Panc1 (cell line): ENCODE measurements at regions of chr11 and their contacts with region 1.

Region 1: DNA sequence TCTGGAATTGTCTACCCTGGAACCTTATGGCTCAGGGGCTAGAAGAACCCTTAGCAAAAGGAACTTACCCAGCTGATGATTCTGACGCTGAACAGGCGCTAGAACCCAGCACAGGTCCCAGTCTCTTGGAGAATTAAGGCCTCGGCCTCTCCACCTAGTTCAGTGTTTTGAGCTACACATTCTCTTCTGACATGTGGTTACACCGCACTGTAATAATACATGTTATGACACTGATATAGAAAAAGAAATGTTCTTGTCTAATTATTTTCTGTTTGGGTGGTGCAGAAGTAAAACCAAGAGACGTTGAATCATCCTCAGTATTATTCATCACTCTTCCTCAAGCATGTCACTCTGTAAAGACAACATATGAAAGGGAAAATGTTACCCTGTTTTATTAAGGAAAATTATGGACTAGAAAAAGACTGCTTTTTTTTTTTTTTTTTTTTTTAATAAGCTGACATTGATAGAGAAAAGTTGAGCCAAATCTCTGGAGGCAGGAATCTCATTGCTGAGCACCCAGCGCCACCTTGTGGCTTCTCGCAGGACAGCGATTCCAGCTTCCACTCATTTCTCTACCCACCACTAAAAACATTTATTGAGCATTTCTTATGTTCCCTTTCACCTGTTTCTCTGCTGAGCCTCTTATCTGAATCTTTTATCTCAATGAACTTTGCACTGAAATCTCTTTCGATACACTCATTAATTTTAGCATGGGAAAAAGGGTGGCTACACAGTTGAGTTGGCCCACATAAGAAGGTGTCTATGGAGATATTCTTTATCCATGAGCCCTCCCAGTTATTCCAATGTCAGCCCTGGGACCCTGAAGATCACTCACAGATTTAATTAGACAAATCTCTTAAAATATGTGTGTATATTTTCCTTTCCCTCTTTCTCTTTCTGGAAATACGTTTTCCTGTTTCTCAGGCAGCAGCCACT is 12.6 kb upstream of the APLNR start:
- DNase-seq: peak; percentile 47
- ATAC-seq: peak; percentile 71
- H3K4me3 ChIP-seq: no peak overlapping the region
- H3K27ac ChIP-seq: no peak overlapping the region
- H3K4me1 ChIP-seq: no peaks in the 10 kb centered on the region; the same call in 1 of the 2 replicates
- H3K27me3 ChIP-seq: peaks cover 5% of the 10 kb centered on the region; the same call in 1 of the 2 replicates
- CTCF ChIP-seq: peak; percentile 86

Region 2: GRCh38 chr11:56841210-56841810 is 408.3 kb before region 1 on chr11:
- CTCF ChIA-PET with region 1: interaction called, 34 read pairs
- POLR2A ChIA-PET with region 1: no interaction called
- in situ Hi-C with region 1: no loop called
- intact Hi-C with region 1: loop called (anchors 1 kb)
- DNase-seq: peak; percentile 55
- ATAC-seq: peak; percentile 78; the same call in 1 of the 2 replicates
- H3K4me3 ChIP-seq: no peak overlapping the region
- H3K27ac ChIP-seq: no peak overlapping the region
- H3K4me1 ChIP-seq: no peaks in the 10 kb centered on the region
- H3K27me3 ChIP-seq: no peaks in the 10 kb centered on the region
- CTCF ChIP-seq: peak; percentile 76

Region 3: DNA sequence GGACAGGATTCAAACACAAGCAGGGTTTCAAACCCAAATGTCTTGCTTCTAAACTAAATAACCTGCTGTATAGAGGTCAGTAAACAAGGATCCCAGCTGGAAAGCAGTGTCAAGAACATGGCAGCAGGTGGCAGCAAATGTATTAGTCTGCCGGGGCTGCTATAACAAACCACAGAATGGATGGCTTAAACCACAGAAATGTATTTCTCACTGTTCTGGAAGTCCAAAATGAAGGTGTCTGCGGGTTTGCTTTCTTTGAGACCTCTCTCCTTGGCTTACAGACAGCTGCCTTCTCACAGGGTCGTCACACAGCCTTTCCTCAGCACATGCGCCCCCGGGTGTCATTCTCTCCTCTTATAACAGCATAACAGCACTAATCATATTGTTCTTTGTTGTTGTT is 133.0 kb before region 1 on chr11:
- CTCF ChIA-PET with region 1: interaction called, 7 read pairs
- POLR2A ChIA-PET with region 1: no interaction called
- in situ Hi-C with region 1: no loop called
- intact Hi-C with region 1: loop called (anchors 1 kb)
- DNase-seq: peak; percentile 8
- ATAC-seq: peak; percentile 82
- H3K4me3 ChIP-seq: no peak overlapping the region
- H3K27ac ChIP-seq: no peak overlapping the region
- H3K4me1 ChIP-seq: no peaks in the 10 kb centered on the region
- H3K27me3 ChIP-seq: peaks cover under 1% of the 10 kb centered on the region; the same call in 1 of the 2 replicates
- CTCF ChIP-seq: peak; percentile 80

Region 4: GRCh38 chr11:57131080-57131790 is 118.4 kb before region 1 on chr11:
- CTCF ChIA-PET with region 1: interaction called, 17 read pairs
- POLR2A ChIA-PET with region 1: no interaction called
- in situ Hi-C with region 1: no loop called
- intact Hi-C with region 1: loop called (anchors 1 kb)
- DNase-seq: no peak
- ATAC-seq: peak; percentile 76; the same call in 1 of the 2 replicates
- H3K4me3 ChIP-seq: no peak overlapping the region
- H3K27ac ChIP-seq: no peak overlapping the region
- H3K4me1 ChIP-seq: no peaks in the 10 kb centered on the region
- H3K27me3 ChIP-seq: peaks cover 13% of the 10 kb centered on the region
- CTCF ChIP-seq: peak; percentile 57

Region 5: DNA sequence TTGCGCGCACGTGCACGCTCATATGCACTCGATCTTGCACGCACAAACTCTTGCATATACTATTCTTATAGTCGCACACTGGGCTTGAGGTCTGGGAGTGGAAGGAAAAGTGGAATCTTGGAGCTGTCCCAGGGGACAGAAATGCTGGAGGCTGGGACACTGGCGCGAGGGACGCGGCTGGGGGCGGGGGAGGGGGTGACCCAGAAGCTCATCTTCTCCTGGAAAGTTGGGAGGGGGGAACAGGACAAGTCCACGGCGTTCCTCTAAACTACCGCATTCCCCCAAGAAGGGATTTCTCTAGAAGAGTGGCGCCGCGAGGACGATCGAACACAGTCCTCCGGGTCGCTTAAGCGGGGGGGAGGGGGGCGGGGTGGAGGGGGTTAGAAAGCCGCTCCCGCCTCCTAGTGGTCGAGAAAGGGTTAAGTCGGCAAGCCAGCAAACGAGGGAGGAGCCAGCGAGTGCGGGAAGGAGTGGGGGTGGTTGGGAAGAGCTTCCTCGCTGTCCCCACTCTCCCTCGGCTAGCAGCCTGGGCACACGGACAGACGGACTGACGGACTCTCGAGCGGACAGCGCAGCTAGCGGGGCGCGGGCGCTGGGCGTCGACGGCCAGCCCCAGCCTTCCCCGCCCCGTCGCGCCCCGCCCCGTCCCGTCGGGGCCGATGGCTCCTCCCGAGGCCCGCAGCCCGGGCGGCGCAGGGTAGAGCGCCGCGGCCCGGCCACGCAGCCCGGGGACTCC is 210.5 kb after region 1 on chr11 and contains the start of gene RTN4RL2:
- CTCF ChIA-PET with region 1: no interaction called
- POLR2A ChIA-PET with region 1: no interaction called
- in situ Hi-C with region 1: no loop called
- intact Hi-C with region 1: no loop called
- DNase-seq: no peak
- ATAC-seq: peak; percentile 52
- H3K4me3 ChIP-seq: peak within 1 kb of the TSS; percentile 30 to 50
- H3K27ac ChIP-seq: no peak within 1 kb of the TSS
- H3K4me1 ChIP-seq: peaks cover 4% of the 10 kb centered on the region; the same call in 1 of the 2 replicates
- H3K27me3 ChIP-seq: peaks cover 6% of the 10 kb centered on the region; the same call in 1 of the 2 replicates
- CTCF ChIP-seq: peak; percentile 61; the same call in 1 of the 2 replicates
- total RNA-seq, gene RTN4RL2: 0.90 TPM

Region 6: GRCh38 chr11:57805780-57806179 is 556.1 kb after region 1 on chr11:
- CTCF ChIA-PET with region 1: interaction called, 13 read pairs
- POLR2A ChIA-PET with region 1: no interaction called
- in situ Hi-C with region 1: no loop called
- intact Hi-C with region 1: no loop called
- DNase-seq: no peak
- ATAC-seq: no peak
- H3K4me3 ChIP-seq: no peak overlapping the region
- H3K27ac ChIP-seq: no peak overlapping the region
- H3K4me1 ChIP-seq: peaks cover 7% of the 10 kb centered on the region
- H3K27me3 ChIP-seq: no peaks in the 10 kb centered on the region
- CTCF ChIP-seq: no peak